GM13977 (cell line): ENCODE measurements at regions of chr4 and their contacts with region 1.

Region 1: DNA sequence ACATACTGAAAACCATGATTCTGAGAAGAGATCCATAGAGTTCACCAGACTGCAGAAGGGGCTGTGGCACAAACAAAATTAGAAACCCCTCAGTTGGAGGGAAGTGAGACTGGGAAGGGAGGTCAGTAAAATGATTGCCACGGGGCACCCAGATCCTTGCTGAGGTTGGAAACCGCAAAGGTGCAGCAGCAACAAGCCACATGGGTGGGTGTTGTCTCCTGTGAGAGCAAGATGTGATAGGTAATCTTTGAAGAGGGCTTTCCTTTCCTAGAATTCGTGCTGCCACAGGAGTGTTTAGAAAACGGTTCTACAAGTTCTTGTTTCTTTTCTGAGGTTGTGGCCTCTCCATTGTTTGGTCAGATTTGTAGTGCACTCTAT is 85.5 kb downstream of the NFKB1 start:
- DNase-seq: no peak
- CTCF ChIP-seq: no peak

Region 2: GRCh38 chr4:102500696-102501446 is 85.8 kb before region 1 on chr4 and contains the start of gene NFKB1:
- in situ Hi-C with region 1: loop called (anchors 10 kb)
- DNase-seq: peak; percentile 81
- CTCF ChIP-seq: no peak

Region 3: DNA sequence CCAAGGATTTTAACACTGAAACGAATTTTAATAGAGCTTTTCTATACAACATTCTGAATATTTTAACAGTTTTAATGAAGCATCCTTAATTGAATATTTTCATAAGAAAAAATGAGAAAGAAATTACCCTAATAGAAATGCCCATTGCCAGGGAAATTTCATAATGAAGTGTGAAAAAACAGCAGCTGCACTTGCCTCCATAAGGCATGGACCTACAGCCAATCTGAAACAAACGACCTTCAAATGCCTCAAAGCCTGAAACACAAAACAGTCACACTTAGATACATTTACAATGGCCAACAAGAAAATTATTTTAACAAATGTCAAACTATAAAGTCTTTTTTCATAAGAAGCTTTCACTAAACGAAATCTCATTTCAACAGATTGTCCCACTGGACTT is 358.4 kb after region 1 on chr4:
- in situ Hi-C with region 1: no loop called
- DNase-seq: no peak
- CTCF ChIP-seq: no peak

Region 4: GRCh38 chr4:103264905-103265304 is 678.3 kb after region 1 on chr4:
- in situ Hi-C with region 1: no loop called
- DNase-seq: no peak
- CTCF ChIP-seq: no peak